ENCODE measurements at regions of chrX and their contacts with region 1.

Region 1: DNA sequence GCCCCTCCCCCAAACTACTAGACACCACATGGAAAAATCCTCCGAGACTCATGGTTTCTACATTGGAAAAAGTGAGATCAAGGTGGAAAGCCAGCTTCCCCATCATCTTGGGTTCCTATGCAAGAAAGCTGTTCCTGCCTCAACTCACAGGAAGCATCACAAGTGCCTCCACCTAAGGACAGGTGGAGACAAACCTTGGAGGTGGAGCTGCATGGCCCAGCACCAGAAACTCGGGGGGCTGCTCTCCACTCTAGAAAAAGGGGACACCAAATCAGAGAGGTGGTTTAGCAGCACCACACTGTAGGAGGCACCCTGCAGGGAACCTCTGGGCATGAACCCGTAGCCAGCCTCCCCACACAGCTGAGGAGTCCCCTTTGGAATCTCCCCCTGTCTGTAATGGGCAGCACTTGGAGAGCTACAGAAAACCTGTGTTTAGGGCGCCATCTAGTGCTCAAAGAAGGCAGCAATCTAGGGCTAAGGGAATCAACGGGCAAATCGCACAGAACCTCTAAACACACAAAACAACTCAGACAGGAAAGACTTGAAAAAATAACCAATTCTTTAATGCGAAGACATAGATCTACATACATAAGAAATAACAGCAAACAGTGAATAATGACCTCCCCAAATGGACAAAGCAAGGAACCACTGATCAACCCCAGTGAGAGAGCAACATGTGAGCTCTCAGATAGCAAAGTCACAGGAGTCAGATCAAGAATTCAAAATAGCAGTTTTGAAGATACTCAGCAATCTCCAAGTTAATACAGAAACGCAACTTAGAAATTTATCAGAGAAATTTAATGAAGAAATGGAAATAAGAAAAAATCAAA is 37.0 kb upstream of the ZBTB33 start:
- DNase-seq: peak; percentile 66
- H3K4me3 ChIP-seq: no peak overlapping the region
- H3K27ac ChIP-seq: no peak overlapping the region
- H3K4me1 ChIP-seq: no peaks in the 10 kb centered on the region; a peak in 1 of 4 replicates
- H3K27me3 ChIP-seq: no peaks in the 10 kb centered on the region; the same call in 1 of the 2 replicates
- CTCF ChIP-seq: peak; percentile 91
- EP300 ChIP-seq: no peak
- RAD21 ChIP-seq: peak; percentile 80

Region 2: GRCh38 chrX:119981286-119982070 is 232.2 kb before region 1 on chrX:
- CTCF ChIA-PET with region 1: interaction called, 14 read pairs
- POLR2A ChIA-PET with region 1: no interaction called
- DNase-seq: peak; percentile 61
- H3K4me3 ChIP-seq: no peak overlapping the region; a peak in 1 of 4 replicates
- H3K27ac ChIP-seq: no peak overlapping the region
- H3K4me1 ChIP-seq: no peaks in the 10 kb centered on the region
- H3K27me3 ChIP-seq: peaks cover 7% of the 10 kb centered on the region; the same call in 1 of the 2 replicates
- CTCF ChIP-seq: peak; percentile 74
- EP300 ChIP-seq: no peak
- RAD21 ChIP-seq: peak; percentile 62

Region 3: GRCh38 chrX:120090208-120090607 is 123.4 kb before region 1 on chrX:
- CTCF ChIA-PET with region 1: interaction called, 12 read pairs
- POLR2A ChIA-PET with region 1: no interaction called
- DNase-seq: no peak
- H3K4me3 ChIP-seq: no peak overlapping the region
- H3K27ac ChIP-seq: no peak overlapping the region
- H3K4me1 ChIP-seq: no peaks in the 10 kb centered on the region; a peak in 1 of 4 replicates
- H3K27me3 ChIP-seq: peaks cover 17% of the 10 kb centered on the region; the same call in 1 of the 2 replicates
- CTCF ChIP-seq: no peak; the same call in 1 of the 2 replicates
- EP300 ChIP-seq: no peak
- RAD21 ChIP-seq: peak; percentile 12; the same call in 1 of the 2 replicates

Region 4: DNA sequence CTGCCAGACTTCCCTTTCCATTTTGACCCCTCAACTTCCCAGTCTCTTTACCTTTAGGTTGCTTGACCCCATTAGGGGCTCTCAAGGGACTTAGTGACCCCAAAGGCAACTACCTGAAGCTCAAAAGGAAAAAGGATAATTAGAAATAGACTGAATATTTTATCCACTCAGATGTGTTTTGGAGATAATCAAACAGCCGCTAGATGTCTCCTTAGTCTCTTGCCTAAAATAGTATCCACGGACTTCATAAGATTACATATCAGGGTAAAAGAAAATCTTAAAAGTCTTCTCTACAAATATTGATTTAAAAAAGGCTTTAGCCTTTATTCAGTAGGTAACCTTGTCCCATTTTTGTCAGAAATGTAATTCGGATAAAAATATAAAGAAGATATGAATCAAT is 76.2 kb before region 1 on chrX:
- CTCF ChIA-PET with region 1: interaction called, 15 read pairs
- POLR2A ChIA-PET with region 1: no interaction called
- DNase-seq: no peak
- H3K4me3 ChIP-seq: no peak overlapping the region
- H3K27ac ChIP-seq: no peak overlapping the region
- H3K4me1 ChIP-seq: no peaks in the 10 kb centered on the region
- H3K27me3 ChIP-seq: no peaks in the 10 kb centered on the region; the same call in 1 of the 2 replicates
- CTCF ChIP-seq: 0 out of 2 replicates have a peak, but pooled peaks have one; percentile 27
- EP300 ChIP-seq: no peak
- RAD21 ChIP-seq: no peak

Region 5: DNA sequence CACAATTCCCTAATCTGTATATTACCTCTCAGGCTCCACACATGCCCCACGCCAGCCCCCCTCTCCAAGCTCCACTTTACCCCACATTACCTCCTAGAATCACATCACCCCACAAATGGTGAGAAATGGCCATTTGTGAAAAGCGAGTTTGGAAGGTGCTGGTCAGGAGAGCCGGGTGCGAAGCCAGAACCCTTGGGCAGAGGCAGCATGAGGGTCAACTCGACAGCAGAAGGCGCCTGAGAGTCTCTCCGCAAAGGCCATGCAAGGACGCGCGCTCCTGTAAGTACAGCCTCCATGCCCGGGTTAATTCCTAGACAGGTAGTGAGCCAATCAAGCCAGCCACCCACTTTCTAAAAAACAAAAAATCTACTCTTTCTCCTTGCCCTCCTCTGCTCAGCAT is 12.8 kb before region 1 on chrX:
- CTCF ChIA-PET with region 1: interaction called, 22 read pairs
- POLR2A ChIA-PET with region 1: no interaction called
- DNase-seq: no peak
- H3K4me3 ChIP-seq: no peak overlapping the region
- H3K27ac ChIP-seq: no peak overlapping the region
- H3K4me1 ChIP-seq: peaks cover 0 to 6% of the 10 kb centered on the region in 2 experiments; a peak in 1 of 4 replicates
- H3K27me3 ChIP-seq: peaks cover 7% of the 10 kb centered on the region; the same call in 1 of the 2 replicates
- CTCF ChIP-seq: no peak
- EP300 ChIP-seq: no peak
- RAD21 ChIP-seq: no peak

Region 6: GRCh38 chrX:120228187-120228908 is 14.7 kb after region 1 on chrX:
- CTCF ChIA-PET with region 1: interaction called, 33 read pairs
- POLR2A ChIA-PET with region 1: no interaction called
- DNase-seq: no peak
- H3K4me3 ChIP-seq: no peak overlapping the region
- H3K27ac ChIP-seq: no peak overlapping the region
- H3K4me1 ChIP-seq: no peaks in the 10 kb centered on the region
- H3K27me3 ChIP-seq: no peaks in the 10 kb centered on the region
- CTCF ChIP-seq: no peak
- EP300 ChIP-seq: no peak
- RAD21 ChIP-seq: no peak

Region 7: GRCh38 chrX:120452131-120452530 is 238.5 kb after region 1 on chrX:
- CTCF ChIA-PET with region 1: interaction called, 11 read pairs
- POLR2A ChIA-PET with region 1: no interaction called
- DNase-seq: peak; percentile 50
- H3K4me3 ChIP-seq: no peak overlapping the region
- H3K27ac ChIP-seq: no peak overlapping the region
- H3K4me1 ChIP-seq: peaks cover 0 to 3% of the 10 kb centered on the region in 2 experiments; a peak in 1 of 4 replicates
- H3K27me3 ChIP-seq: no peaks in the 10 kb centered on the region
- CTCF ChIP-seq: peak; percentile 69
- EP300 ChIP-seq: no peak
- RAD21 ChIP-seq: peak; percentile 60

Measured in SK-N-SH (cell line).